ENCODE measurements at regions of chr5 and their contacts with region 1.

Region 1: DNA sequence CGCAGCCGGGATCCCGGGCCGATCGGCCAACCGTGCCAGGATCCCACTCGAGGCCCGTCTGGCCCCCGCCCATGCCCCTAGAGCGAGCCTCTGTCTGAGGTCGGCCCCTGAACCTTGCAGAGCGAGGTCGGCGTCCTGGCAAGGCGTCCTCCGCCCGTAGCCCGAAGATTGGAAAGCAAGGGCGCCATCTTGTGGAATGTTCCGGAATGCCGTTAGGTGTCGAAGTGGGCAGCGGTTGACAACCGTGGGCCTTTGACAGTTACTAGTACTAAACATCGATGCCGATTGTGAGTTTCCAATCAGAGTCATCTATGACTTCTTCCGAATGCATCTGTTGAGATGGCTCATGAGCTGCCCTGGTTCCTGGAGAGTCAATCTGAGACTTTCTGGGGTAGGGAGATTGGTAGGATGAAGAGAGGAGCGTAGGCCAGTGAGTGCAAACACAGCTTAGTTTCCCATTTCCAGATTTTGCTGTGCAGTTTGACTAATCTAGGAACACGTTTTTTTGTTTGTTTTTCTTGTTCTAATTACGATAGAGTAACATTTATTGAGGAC is 923 bp upstream of the PLK2 start:
- DNase-seq: peak; percentile 86
- ATAC-seq: peak; percentile 65
- H3K4me3 Mint-ChIP-seq: peak overlapping the region; percentile 89
- H3K27ac Mint-ChIP-seq: peak overlapping the region; percentile 83
- H3K4me1 Mint-ChIP-seq: peaks cover 16% of the 10 kb centered on the region
- H3K27me3 Mint-ChIP-seq: no peaks in the 10 kb centered on the region
- CTCF ChIP-seq: no peak

Region 2: DNA sequence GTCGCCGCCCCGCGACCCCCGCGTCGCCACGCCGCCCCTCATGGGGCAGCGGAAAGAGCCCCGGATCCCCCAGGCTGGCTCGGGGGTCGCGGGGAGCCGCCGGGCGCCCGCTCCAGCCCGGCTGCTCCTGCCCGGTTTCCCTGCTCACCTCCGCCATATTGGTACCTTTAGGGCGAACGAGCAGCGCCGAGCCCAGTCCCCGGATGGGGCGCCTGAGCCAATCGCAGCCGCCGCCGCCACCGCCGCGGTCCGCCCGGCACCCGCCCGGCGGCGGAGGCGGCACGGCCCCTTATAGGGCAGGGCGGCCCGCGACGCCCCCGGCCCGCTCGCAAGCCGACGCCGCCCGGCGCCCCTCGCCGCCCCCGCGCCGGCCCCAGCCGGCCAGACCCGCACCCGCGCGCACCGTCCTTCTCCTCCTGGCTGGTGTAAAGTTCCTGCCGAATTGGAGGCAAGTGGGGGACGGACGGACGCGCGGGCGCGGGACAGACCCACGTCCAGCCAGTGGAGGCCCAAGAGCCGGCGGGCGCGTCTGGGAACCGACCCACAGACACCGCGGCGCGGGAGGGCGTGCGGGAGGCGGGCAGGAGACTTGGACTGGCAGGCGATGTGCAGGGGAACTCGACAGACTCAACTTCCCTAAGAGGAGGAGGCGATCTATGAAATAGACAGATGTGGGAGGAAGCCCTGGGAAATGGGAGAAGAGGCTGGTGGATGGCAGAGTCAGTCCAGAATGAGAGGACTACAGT is 1508.7 kb before region 1 on chr5 and contains the start of gene MIER3:
- CTCF ChIA-PET with region 1: no interaction called
- POLR2A ChIA-PET with region 1: no interaction called
- intact Hi-C with region 1: loop called (anchors 1 kb)
- DNase-seq: peak; percentile 75
- ATAC-seq: peak; percentile 96
- H3K4me3 Mint-ChIP-seq: peak within 1 kb of the TSS; percentile 95
- H3K27ac Mint-ChIP-seq: peak within 1 kb of the TSS; percentile 80
- H3K4me1 Mint-ChIP-seq: peaks cover 20% of the 10 kb centered on the region
- H3K27me3 Mint-ChIP-seq: peaks cover 7% of the 10 kb centered on the region
- CTCF ChIP-seq: no peak
- total RNA-seq, gene MIER3: 22.2 and 23.5 TPM in 2 replicates

Region 3: GRCh38 chr5:57650360-57651069 is 810.3 kb before region 1 on chr5:
- CTCF ChIA-PET with region 1: interaction called, 23 read pairs
- POLR2A ChIA-PET with region 1: no interaction called
- intact Hi-C with region 1: loop called (anchors 1 kb)
- DNase-seq: no peak
- ATAC-seq: peak; percentile 50
- H3K4me3 Mint-ChIP-seq: no peak overlapping the region
- H3K27ac Mint-ChIP-seq: no peak overlapping the region
- H3K4me1 Mint-ChIP-seq: no peaks in the 10 kb centered on the region
- H3K27me3 Mint-ChIP-seq: peaks cover 4% of the 10 kb centered on the region
- CTCF ChIP-seq: peak; percentile 16

Region 4: DNA sequence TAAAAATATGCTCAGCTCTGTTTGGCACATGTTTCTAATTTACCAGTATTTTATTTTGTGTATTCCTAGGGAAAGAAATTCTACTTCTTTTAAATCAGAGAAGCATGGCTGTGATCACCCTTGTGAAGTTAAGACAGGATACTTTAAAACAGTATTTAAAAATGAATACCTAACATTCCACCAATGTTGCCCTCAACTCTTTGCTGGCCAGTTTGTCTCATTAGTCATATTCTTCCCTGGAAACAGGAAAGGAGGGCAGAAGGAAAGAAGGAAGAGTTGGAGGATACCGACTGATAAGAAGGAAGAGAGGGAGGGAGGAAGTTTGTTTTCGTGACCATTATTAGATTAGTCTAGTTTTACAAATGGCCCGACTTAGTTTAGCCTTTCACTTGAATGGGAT is 138.4 kb before region 1 on chr5:
- CTCF ChIA-PET with region 1: no interaction called
- POLR2A ChIA-PET with region 1: no interaction called
- intact Hi-C with region 1: no loop called
- DNase-seq: no peak
- ATAC-seq: no peak
- H3K4me3 Mint-ChIP-seq: no peak overlapping the region
- H3K27ac Mint-ChIP-seq: no peak overlapping the region
- H3K4me1 Mint-ChIP-seq: no peaks in the 10 kb centered on the region
- H3K27me3 Mint-ChIP-seq: peaks cover 6% of the 10 kb centered on the region
- CTCF ChIP-seq: no peak

Region 5: GRCh38 chr5:58447226-58447625 is 13.6 kb before region 1 on chr5:
- CTCF ChIA-PET with region 1: interaction called, 10 read pairs
- POLR2A ChIA-PET with region 1: interaction called, 3 read pairs
- intact Hi-C with region 1: no loop called
- DNase-seq: no peak
- ATAC-seq: no peak
- H3K4me3 Mint-ChIP-seq: no peak overlapping the region
- H3K27ac Mint-ChIP-seq: no peak overlapping the region
- H3K4me1 Mint-ChIP-seq: no peaks in the 10 kb centered on the region
- H3K27me3 Mint-ChIP-seq: peaks cover 4% of the 10 kb centered on the region
- CTCF ChIP-seq: no peak

Region 6: DNA sequence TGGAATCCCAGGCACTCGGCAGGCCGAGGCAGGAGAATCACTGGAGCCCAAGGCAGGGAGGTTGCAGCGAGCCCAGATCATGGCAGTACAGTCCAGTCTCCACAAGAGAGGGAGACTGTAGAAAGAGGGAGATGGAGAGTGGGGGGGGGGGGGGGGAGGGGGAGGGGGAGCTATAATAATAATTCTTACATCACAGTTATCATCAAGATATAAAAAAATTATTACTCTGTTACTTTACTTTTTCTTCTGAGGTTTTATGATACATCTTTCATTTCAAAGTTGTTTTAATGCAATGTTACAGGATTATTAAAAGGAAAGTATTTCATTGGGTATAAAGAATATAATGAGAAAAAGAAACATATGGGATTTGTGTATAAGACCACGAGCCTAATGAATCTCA is 104.2 kb after region 1 on chr5:
- CTCF ChIA-PET with region 1: no interaction called
- POLR2A ChIA-PET with region 1: no interaction called
- intact Hi-C with region 1: no loop called
- DNase-seq: no peak
- ATAC-seq: no peak
- H3K4me3 Mint-ChIP-seq: no peak overlapping the region
- H3K27ac Mint-ChIP-seq: no peak overlapping the region
- H3K4me1 Mint-ChIP-seq: peaks cover 10% of the 10 kb centered on the region
- H3K27me3 Mint-ChIP-seq: no peaks in the 10 kb centered on the region
- CTCF ChIP-seq: no peak

Region 7: GRCh38 chr5:58582803-58583491 is 122.1 kb after region 1 on chr5 and contains the start of gene RAB3C:
- CTCF ChIA-PET with region 1: interaction called, 5 read pairs
- POLR2A ChIA-PET with region 1: interaction called, 4 read pairs
- intact Hi-C with region 1: loop called (anchors 1 kb)
- DNase-seq: peak; percentile 68
- ATAC-seq: peak; percentile 100
- H3K4me3 Mint-ChIP-seq: peak within 1 kb of the TSS; percentile 97
- H3K27ac Mint-ChIP-seq: peak within 1 kb of the TSS; percentile 27
- H3K4me1 Mint-ChIP-seq: peaks cover 25% of the 10 kb centered on the region
- H3K27me3 Mint-ChIP-seq: peaks cover 37% of the 10 kb centered on the region
- CTCF ChIP-seq: no peak
- total RNA-seq, gene RAB3C: 0.47 TPM in 1 of 2 replicates, not detected in the other

Measured in activated B cell treated with CpG ODN at 0.5 μM for 24 hours (primary cell).